HepG2 (cell line): ENCODE measurements at regions of chr17 and their contacts with region 1.

Region 1: GRCh38 chr17:61946359-61946758 is 18.6 kb upstream of the INTS2 start:
- DNase-seq: no peak
- ATAC-seq: no peak
- H3K4me3 ChIP-seq: no peak overlapping the region
- H3K27ac ChIP-seq: no peak overlapping the region
- H3K4me1 ChIP-seq: no peaks in the 10 kb centered on the region
- H3K27me3 ChIP-seq: no peaks in the 10 kb centered on the region
- CTCF ChIP-seq: no peak
- EP300 ChIP-seq: no peak
- POLR2A ChIP-seq: no peak
- RAD21 ChIP-seq: no peak

Region 2: DNA sequence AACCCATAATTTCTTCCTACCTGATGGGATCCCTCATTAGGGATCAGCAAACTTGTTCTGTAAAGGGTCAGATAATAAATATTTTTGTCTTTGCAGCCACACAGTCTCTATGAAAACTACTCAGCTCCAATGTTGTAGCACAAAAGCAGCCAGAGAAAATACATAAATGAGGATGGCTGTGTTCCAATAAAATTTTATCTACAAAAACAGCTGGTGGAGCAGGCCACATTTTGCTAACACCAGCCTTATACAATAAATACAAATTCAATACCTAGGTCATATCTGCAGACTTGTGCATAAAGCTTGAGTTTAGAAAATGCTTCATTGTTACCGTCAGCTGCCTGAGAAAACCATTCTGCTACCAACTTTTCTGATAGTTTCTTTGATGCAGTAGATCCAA is 19.8 kb after region 1 on chr17:
- CTCF ChIA-PET with region 1: no interaction called
- POLR2A ChIA-PET with region 1: no interaction called
- in situ Hi-C with region 1: no loop called
- intact Hi-C with region 1: loop called (anchors 2 kb)
- DNase-seq: no peak
- ATAC-seq: no peak
- H3K4me3 ChIP-seq: no peak overlapping the region
- H3K27ac ChIP-seq: no peak overlapping the region
- H3K4me1 ChIP-seq: no peaks in the 10 kb centered on the region
- H3K27me3 ChIP-seq: no peaks in the 10 kb centered on the region
- CTCF ChIP-seq: no peak
- EP300 ChIP-seq: no peak
- POLR2A ChIP-seq: no peak
- RAD21 ChIP-seq: no peak

Region 3: GRCh38 chr17:62052757-62053338 is 106.5 kb after region 1 on chr17:
- CTCF ChIA-PET with region 1: no interaction called
- POLR2A ChIA-PET with region 1: no interaction called
- in situ Hi-C with region 1: no loop called
- intact Hi-C with region 1: no loop called
- DNase-seq: no peak
- ATAC-seq: no peak
- H3K4me3 ChIP-seq: no peak overlapping the region
- H3K27ac ChIP-seq: no peak overlapping the region
- H3K4me1 ChIP-seq: peaks cover 56% of the 10 kb centered on the region
- H3K27me3 ChIP-seq: no peaks in the 10 kb centered on the region
- CTCF ChIP-seq: no peak
- EP300 ChIP-seq: no peak
- POLR2A ChIP-seq: no peak
- RAD21 ChIP-seq: no peak